ENCODE measurements at regions of chr12 and their contacts with region 1.

Region 1: GRCh38 chr12:117836999-117837736 is 131.6 kb downstream of the KSR2 start:
- DNase-seq: peak; percentile 84
- H3K4me3 ChIP-seq: no peak overlapping the region
- H3K27ac ChIP-seq: no peak overlapping the region
- H3K4me1 ChIP-seq: no peaks in the 10 kb centered on the region
- H3K27me3 ChIP-seq: no peaks in the 10 kb centered on the region
- CTCF ChIP-seq: peak; percentile 87

Region 2: GRCh38 chr12:117236456-117237001 is 600.6 kb before region 1 on chr12:
- intact Hi-C with region 1: loop called (anchors 5 kb)
- DNase-seq: peak; percentile 85
- H3K4me3 ChIP-seq: no peak overlapping the region
- H3K27ac ChIP-seq: no peak overlapping the region
- H3K4me1 ChIP-seq: no peaks in the 10 kb centered on the region
- H3K27me3 ChIP-seq: no peaks in the 10 kb centered on the region
- CTCF ChIP-seq: peak; percentile 68

Region 3: DNA sequence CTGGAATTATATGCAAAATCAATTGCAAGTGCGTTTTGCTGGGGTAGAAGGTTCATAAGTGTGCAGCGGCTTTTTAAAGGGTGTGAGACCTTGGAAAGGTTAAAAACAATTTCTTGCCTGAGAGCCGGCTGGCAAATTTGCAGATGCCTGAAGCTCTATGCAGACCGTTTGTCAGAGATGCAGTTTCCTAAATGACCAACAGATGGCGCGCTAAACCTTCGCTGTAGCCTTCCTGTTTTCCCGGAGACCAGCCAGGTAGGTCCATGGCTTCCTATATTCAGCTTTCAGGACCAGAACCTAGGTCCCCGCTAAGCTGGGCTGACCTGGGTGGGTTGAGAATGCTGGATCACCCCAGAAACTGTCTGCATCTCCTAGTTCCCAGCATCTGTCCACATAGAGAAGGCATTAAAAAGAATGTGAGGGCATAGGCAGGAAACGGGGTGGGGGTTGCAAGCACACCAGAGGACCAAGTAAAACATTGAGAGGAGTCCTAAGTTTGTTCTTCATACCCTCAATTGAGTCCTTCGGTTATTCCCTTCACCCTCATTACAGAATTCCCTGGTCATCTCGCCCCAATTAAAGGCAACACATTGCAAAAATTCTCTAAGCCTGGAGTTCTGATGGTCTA is 470.0 kb before region 1 on chr12:
- intact Hi-C with region 1: loop called (anchors 2 kb)
- DNase-seq: peak; percentile 74
- H3K4me3 ChIP-seq: no peak overlapping the region
- H3K27ac ChIP-seq: no peak overlapping the region
- H3K4me1 ChIP-seq: no peaks in the 10 kb centered on the region
- H3K27me3 ChIP-seq: peaks cover 2% of the 10 kb centered on the region
- CTCF ChIP-seq: peak; percentile 84

Region 4: GRCh38 chr12:117587631-117588287 is 249.4 kb before region 1 on chr12:
- intact Hi-C with region 1: loop called (anchors 5 kb)
- DNase-seq: peak; percentile 56
- H3K4me3 ChIP-seq: no peak overlapping the region
- H3K27ac ChIP-seq: no peak overlapping the region
- H3K4me1 ChIP-seq: no peaks in the 10 kb centered on the region
- H3K27me3 ChIP-seq: no peaks in the 10 kb centered on the region
- CTCF ChIP-seq: peak; percentile 83

Region 5: DNA sequence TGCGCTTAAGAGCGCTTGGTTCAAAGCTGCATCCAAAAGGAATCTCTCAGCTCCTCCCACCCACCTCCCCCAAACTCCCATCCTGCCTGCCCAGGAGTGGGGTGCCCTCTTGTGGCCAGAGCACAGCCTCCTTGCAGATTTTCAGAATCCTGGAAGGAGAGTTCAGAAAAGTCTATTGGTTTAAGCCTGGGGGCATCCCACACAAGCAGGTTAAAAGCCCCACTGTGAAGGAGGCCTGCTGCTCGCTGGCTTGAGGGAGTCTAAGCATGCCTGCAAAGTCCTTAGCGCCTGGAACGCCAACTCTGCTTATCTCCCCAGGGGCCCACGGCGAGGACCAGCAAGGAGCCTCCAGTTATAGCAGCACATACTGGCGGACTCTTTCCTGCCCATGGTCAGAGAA is 165.4 kb before region 1 on chr12:
- intact Hi-C with region 1: loop called (anchors 5 kb)
- DNase-seq: no peak
- H3K4me3 ChIP-seq: no peak overlapping the region
- H3K27ac ChIP-seq: no peak overlapping the region
- H3K4me1 ChIP-seq: no peaks in the 10 kb centered on the region
- H3K27me3 ChIP-seq: no peaks in the 10 kb centered on the region
- CTCF ChIP-seq: peak; percentile 24

Region 6: GRCh38 chr12:117900561-117900960 is 63.4 kb after region 1 on chr12:
- intact Hi-C with region 1: no loop called
- DNase-seq: no peak
- H3K4me3 ChIP-seq: no peak overlapping the region
- H3K27ac ChIP-seq: no peak overlapping the region
- H3K4me1 ChIP-seq: no peaks in the 10 kb centered on the region
- H3K27me3 ChIP-seq: no peaks in the 10 kb centered on the region
- CTCF ChIP-seq: no peak

Region 7: GRCh38 chr12:118098911-118099671 is 261.9 kb after region 1 on chr12:
- intact Hi-C with region 1: no loop called
- DNase-seq: peak; percentile 66
- H3K4me3 ChIP-seq: no peak overlapping the region
- H3K27ac ChIP-seq: peak overlapping the region; percentile 52
- H3K4me1 ChIP-seq: peaks cover 4% of the 10 kb centered on the region
- H3K27me3 ChIP-seq: no peaks in the 10 kb centered on the region
- CTCF ChIP-seq: no peak